Spleen (tissue), 13 donors: ENCODE measurements at regions of chr11 and their contacts with region 1.

Region 1: DNA sequence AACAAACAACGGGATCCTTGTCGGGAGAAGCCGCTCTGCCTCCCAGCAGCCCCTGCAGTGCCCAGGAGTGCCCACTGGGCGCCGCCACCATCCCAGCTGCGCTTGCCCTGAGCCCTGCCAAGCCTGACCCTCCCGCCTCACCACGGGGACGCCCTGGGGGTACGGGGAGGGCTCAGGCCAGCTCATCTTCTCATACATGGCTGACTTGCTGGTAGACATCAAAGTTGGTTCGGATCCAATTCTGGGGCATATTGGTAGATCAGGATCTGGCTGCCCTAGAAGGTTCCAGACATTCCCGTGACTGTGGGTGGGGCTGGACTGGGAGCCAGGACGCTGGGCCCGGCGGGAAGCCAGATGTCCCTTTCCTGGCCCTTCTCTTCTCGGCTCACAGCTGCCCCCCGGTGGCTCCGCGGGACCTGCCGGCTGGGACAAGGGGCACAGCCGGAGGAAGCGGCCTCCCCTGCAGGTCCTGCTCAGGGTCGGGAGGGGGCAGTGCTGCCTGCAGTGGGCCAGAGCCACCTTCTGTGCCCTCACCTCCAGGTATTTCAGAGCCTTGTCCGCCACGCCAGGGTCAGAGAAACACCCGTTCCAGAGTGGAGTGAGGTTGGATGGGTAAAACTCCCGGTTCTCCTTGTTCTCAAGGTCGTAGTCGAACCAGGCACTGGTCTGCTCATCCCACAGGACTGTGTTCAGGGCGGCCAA is 10.6 kb upstream of the TREH start:
- DNase-seq: peak; percentile 96
- H3K4me3 ChIP-seq: peak overlapping the region in 6 of 8 donors; percentile 30 to 59 (median 34)
- H3K27ac ChIP-seq: peak overlapping the region in 7 of 8 donors; percentile 34 to 83 (median 65)
- H3K4me1 ChIP-seq: peaks cover 8 to 51% (median 35%) of the 10 kb centered on the region in 6 donors
- H3K27me3 ChIP-seq: peaks cover 0 to 18% (median 0%) of the 10 kb centered on the region in 7 donors
- CTCF ChIP-seq: peak; percentile 65 to 97 (median 90)
- POLR2A ChIP-seq: no peak

Region 2: DNA sequence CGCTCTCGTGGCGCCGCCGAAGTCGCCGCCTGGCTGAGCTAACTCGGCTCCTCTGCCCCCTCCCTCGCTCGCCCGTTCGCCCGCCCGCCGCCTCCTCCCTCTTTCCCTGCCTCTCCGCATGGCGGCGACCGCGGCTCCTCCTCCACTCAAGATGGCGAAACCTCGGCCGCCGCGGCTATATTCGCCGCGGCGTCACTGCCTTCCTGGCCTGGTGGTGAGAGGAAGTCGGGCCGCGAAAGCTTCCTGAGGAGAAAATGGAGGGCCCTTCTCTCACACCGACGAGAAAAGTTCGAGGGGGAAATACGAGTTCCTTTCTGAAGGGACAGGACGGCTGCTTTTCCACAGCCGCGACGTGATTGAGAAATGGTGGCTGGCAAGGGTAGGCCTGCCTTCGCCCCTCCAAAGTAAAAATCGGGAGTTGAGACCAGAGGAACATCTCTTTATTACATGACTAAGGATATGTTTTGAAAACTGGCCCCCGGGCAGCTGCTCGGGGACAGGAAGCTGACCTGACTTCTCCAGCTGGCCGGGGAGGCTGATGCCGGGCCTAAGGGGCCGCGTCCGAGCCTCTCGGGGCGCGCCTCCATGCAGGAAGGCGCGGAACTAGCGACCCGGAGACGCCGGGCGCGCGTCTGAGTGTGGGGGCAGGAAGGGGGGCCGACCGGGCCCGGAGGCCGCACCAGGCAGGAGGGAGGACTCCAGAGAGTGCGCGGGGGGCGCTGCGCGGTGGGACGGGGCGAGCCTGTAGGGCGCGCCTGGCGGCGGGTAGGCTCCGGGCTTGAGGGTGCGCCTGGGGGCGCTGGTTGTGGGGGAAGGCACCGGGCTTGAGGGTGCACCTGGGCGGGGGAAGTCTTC is 101.3 kb after region 1 on chr11 and contains the start of gene DDX6:
- intact Hi-C with region 1: loop called (anchors 10 kb)
- DNase-seq: peak; percentile 99
- H3K4me3 ChIP-seq: peak within 1 kb of the TSS; percentile 74 to 98 (median 88)
- H3K27ac ChIP-seq: peak within 1 kb of the TSS; percentile 99 to 100 (median 100)
- H3K4me1 ChIP-seq: peaks cover 25 to 60% (median 40%) of the 10 kb centered on the region in 6 donors
- H3K27me3 ChIP-seq: no peaks in the 10 kb centered on the region
- CTCF ChIP-seq: peak in 7 of 11 experiments; percentile 19 to 55 (median 44)
- POLR2A ChIP-seq: peak; percentile 72 to 86 (median 81)
- total RNA-seq, gene DDX6: 146 to 206 (median 179) TPM

Region 3: GRCh38 chr11:118870396-118871345 is 180.7 kb after region 1 on chr11:
- intact Hi-C with region 1: no loop called
- DNase-seq: peak; percentile 83
- H3K4me3 ChIP-seq: peak overlapping the region in 7 of 8 donors; percentile 5 to 59 (median 20)
- H3K27ac ChIP-seq: peak overlapping the region; percentile 86 to 97 (median 89)
- H3K4me1 ChIP-seq: peaks cover 25 to 72% (median 48%) of the 10 kb centered on the region in 6 donors
- H3K27me3 ChIP-seq: no peaks in the 10 kb centered on the region
- CTCF ChIP-seq: peak in 2 of 11 experiments; percentile 4 to 14
- POLR2A ChIP-seq: no peak

Region 4: DNA sequence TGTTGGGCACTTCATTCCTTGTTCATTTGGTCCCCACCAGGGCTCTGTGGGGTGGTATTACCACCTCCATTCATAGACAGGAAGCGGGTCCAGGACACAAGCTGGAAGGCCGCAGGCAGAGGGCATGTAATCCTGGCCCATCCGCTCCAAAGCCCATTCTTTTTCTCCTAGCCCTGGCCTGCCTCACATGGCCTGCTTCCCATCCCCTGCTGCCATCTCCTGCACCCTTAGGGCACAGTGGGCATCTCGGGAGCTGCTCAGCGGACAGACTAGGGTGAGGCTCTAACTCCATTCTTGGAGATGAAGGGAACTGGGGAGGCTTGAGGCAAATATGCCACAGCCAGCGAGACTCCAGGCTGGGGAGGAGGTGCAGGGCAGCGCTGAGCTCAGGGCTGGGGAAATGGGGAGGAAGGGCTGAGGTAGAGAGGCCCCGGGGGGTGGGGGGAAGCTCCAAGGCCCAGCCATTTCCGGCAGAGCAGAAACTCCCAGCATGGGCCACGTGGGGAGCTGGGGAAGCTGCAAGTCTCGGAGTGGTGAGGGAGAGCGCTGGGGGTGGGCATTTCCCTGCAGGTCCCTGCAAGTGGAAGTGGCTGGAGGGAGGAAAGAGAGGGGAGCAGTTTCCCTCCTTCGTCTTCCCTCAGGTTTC is 250.1 kb after region 1 on chr11:
- intact Hi-C with region 1: loop called (anchors 5 kb)
- DNase-seq: peak; percentile 84
- H3K4me3 ChIP-seq: no peak overlapping the region
- H3K27ac ChIP-seq: no peak overlapping the region
- H3K4me1 ChIP-seq: peaks cover 9 to 26% (median 12%) of the 10 kb centered on the region in 6 donors
- H3K27me3 ChIP-seq: no peaks in the 10 kb centered on the region
- CTCF ChIP-seq: no peak
- POLR2A ChIP-seq: no peak

Region 5: GRCh38 chr11:118956094-118956846 is 266.3 kb after region 1 on chr11 and contains the start of gene UPK2:
- intact Hi-C with region 1: loop called (anchors 2 kb)
- DNase-seq: peak; percentile 96
- H3K4me3 ChIP-seq: no peak within 1 kb of the TSS
- H3K27ac ChIP-seq: no peak within 1 kb of the TSS
- H3K4me1 ChIP-seq: peaks cover 0 to 9% (median 0%) of the 10 kb centered on the region in 6 donors
- H3K27me3 ChIP-seq: peaks cover 0 to 28% (median 0%) of the 10 kb centered on the region in 7 donors
- CTCF ChIP-seq: peak; percentile 94 to 98 (median 97)
- POLR2A ChIP-seq: no peak
- total RNA-seq, gene UPK2: not detected